Caco-2 (cell line): ENCODE measurements at regions of chr6 and their contacts with region 1.

Region 1: GRCh38 chr6:69732640-69733039 is 64.2 kb downstream of the LMBRD1 start:
- DNase-seq: no peak
- H3K4me3 ChIP-seq: no peak overlapping the region
- H3K4me3 Mint-ChIP-seq: no peak overlapping the region
- H3K27ac Mint-ChIP-seq: no peak overlapping the region
- H3K4me1 ChIP-seq: no peaks in the 10 kb centered on the region
- H3K4me1 Mint-ChIP-seq: no peaks in the 10 kb centered on the region
- H3K27me3 ChIP-seq: no peaks in the 10 kb centered on the region
- H3K27me3 Mint-ChIP-seq: no peaks in the 10 kb centered on the region
- CTCF ChIP-seq: peak in 1 of 2 experiments; percentile 19

Region 2: GRCh38 chr6:69622230-69622629 is 110.4 kb before region 1 on chr6:
- CTCF ChIA-PET with region 1: no interaction called
- POLR2A ChIA-PET with region 1: no interaction called
- intact Hi-C with region 1: loop called (anchors 5 kb)
- DNase-seq: no peak
- H3K4me3 ChIP-seq: no peak overlapping the region
- H3K4me3 Mint-ChIP-seq: no peak overlapping the region
- H3K27ac Mint-ChIP-seq: no peak overlapping the region
- H3K4me1 ChIP-seq: peaks cover 6% of the 10 kb centered on the region; the same call in 1 of the 2 replicates
- H3K4me1 Mint-ChIP-seq: peaks cover 7% of the 10 kb centered on the region
- H3K27me3 ChIP-seq: no peaks in the 10 kb centered on the region
- H3K27me3 Mint-ChIP-seq: no peaks in the 10 kb centered on the region
- CTCF ChIP-seq: no peak

Region 3: DNA sequence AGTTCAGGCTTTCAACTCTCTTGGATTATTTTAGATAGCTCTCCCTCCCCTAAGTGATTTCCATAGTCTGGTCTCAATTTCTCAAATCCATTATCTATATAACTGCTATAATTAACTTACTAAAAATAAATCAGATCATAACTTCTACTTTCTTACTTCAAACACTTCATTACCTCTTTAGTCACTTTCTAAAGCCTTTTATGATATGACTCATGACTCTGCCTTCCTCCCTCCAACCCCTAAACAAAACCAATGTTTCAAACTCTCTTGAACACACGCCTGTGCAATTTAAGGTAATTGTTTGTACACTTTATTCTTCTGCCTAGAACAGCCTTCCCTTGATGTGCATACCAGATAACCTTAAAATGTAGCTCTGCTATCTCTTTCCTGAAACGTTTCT is 36.4 kb before region 1 on chr6:
- CTCF ChIA-PET with region 1: no interaction called
- POLR2A ChIA-PET with region 1: no interaction called
- intact Hi-C with region 1: no loop called
- DNase-seq: no peak
- H3K4me3 ChIP-seq: no peak overlapping the region
- H3K4me3 Mint-ChIP-seq: no peak overlapping the region
- H3K27ac Mint-ChIP-seq: no peak overlapping the region
- H3K4me1 ChIP-seq: no peaks in the 10 kb centered on the region
- H3K4me1 Mint-ChIP-seq: no peaks in the 10 kb centered on the region
- H3K27me3 ChIP-seq: no peaks in the 10 kb centered on the region
- H3K27me3 Mint-ChIP-seq: no peaks in the 10 kb centered on the region
- CTCF ChIP-seq: no peak

Region 4: GRCh38 chr6:69796642-69797390 is 64.2 kb after region 1 on chr6 and contains the start of gene LMBRD1:
- CTCF ChIA-PET with region 1: interaction called, 6 read pairs
- POLR2A ChIA-PET with region 1: no interaction called
- intact Hi-C with region 1: loop called (anchors 1 kb)
- DNase-seq: peak; percentile 96 to 98
- H3K4me3 ChIP-seq: peak within 1 kb of the TSS; percentile 79
- H3K4me3 Mint-ChIP-seq: peak within 1 kb of the TSS; percentile 98
- H3K27ac Mint-ChIP-seq: peak within 1 kb of the TSS; percentile 98
- H3K4me1 ChIP-seq: peaks cover 4% of the 10 kb centered on the region; the same call in 1 of the 2 replicates
- H3K4me1 Mint-ChIP-seq: peaks cover 15% of the 10 kb centered on the region
- H3K27me3 ChIP-seq: no peaks in the 10 kb centered on the region
- H3K27me3 Mint-ChIP-seq: no peaks in the 10 kb centered on the region
- CTCF ChIP-seq: peak; percentile 91 to 98
- total RNA-seq, gene LMBRD1: 25.0 and 27.5 TPM in 2 replicates

Region 5: GRCh38 chr6:69866770-69867638 is 134.4 kb after region 1 on chr6:
- CTCF ChIA-PET with region 1: no interaction called
- POLR2A ChIA-PET with region 1: no interaction called
- intact Hi-C with region 1: loop called (anchors 5 kb)
- DNase-seq: peak; percentile 47 to 78
- H3K4me3 ChIP-seq: peak overlapping the region; percentile 53
- H3K4me3 Mint-ChIP-seq: peak overlapping the region; percentile 81
- H3K27ac Mint-ChIP-seq: no peak overlapping the region
- H3K4me1 ChIP-seq: peaks cover 5% of the 10 kb centered on the region
- H3K4me1 Mint-ChIP-seq: peaks cover 4% of the 10 kb centered on the region
- H3K27me3 ChIP-seq: no peaks in the 10 kb centered on the region
- H3K27me3 Mint-ChIP-seq: peaks cover 7% of the 10 kb centered on the region
- CTCF ChIP-seq: peak in 1 of 2 experiments; percentile 15

Region 6: DNA sequence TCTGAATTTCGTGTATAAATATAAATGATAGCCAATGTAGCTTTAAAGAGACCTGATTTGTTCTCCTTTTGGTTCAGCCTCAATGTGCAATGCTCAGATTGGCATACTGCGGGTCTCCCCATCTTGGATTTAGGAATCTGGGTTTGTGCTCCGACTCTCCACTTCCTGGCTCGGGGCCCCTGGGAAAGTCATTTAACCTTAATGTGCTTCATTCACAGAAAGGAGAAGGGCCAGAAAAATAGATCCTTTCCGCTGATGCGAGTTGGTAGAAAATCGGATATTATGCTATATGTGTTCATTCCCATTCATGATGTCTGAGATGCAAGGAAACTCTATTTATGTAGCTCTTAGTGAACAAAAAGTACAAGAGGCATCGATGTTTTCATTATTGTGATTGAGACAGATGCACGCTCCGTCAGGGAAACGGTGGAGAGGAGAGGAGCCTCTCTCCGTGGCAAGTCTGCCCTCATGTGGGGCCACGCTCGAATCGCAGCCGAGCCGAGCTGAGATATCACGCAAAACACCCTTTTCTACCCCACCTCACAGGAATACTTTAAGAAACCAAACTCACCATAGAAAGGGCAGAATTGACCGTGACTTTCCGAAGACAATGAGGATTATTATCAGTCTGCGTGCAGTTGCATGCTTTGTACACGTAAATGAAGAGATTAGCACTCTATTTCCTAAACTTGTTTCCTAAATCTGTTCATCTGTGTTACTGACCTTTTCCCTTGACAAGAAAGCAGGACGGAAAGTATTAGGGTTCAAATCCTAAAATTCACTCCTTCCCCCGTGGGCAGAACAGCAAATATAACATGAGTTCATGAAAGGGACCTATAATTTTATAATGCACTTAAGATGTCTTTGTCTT is 433.7 kb after region 1 on chr6:
- CTCF ChIA-PET with region 1: no interaction called
- POLR2A ChIA-PET with region 1: no interaction called
- intact Hi-C with region 1: loop called (anchors 1 kb)
- DNase-seq: peak; percentile 43 to 55
- H3K4me3 ChIP-seq: no peak overlapping the region
- H3K4me3 Mint-ChIP-seq: peak overlapping the region; percentile 61
- H3K27ac Mint-ChIP-seq: no peak overlapping the region
- H3K4me1 ChIP-seq: no peaks in the 10 kb centered on the region
- H3K4me1 Mint-ChIP-seq: no peaks in the 10 kb centered on the region
- H3K27me3 ChIP-seq: no peaks in the 10 kb centered on the region; the same call in 1 of the 2 replicates
- H3K27me3 Mint-ChIP-seq: no peaks in the 10 kb centered on the region
- CTCF ChIP-seq: peak; percentile 40 to 71